ENCODE measurements at regions of chr10 and their contacts with region 1.

Region 1: DNA sequence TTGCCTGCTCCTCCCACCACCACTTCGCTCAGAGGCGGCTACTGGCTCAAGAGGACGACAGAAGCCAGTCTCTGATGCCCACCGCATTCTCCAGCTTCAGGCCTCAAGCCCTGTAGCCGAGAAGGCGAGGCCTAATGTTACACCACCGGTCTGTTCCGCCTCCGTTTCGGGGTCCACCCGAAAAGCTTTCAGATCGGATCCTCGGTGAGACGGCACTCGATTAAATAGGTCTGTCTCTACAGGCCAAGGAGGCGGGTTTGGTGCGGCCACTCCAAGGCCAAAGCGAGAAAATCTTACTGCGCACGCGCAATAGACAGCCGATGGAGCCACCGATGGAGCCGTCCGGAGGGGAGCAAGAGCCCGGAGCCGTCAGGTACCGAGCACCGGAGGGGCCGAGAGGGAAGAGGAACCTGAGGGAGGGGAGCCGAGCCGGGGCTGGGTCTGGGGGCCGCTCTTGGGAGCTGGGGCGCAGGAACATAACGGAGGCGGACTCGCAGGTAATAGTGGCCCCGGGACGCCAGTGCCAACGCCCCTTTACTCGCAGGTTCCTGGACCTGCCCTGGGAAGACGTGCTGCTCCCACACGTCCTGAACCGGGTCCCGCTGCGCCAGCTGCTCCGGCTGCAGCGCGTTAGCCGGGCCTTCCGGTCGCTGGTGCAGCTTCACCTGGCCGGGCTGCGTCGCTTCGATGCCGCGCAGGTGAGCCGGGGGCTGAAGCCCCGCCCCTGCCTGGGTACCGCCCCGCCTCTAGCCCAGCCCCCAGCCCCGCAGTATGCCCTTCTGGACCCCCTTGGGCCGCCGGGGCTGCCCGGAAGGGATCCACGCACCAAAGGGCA is at the start of gene FBXL15:
- DNase-seq: peak; percentile 96
- CTCF ChIP-seq: no peak

Region 2: GRCh38 chr10:102302611-102303010 is 118.4 kb before region 1 on chr10:
- CTCF ChIA-PET with region 1: no interaction called
- POLR2A ChIA-PET with region 1: no interaction called
- DNase-seq: no peak
- CTCF ChIP-seq: no peak

Region 3: DNA sequence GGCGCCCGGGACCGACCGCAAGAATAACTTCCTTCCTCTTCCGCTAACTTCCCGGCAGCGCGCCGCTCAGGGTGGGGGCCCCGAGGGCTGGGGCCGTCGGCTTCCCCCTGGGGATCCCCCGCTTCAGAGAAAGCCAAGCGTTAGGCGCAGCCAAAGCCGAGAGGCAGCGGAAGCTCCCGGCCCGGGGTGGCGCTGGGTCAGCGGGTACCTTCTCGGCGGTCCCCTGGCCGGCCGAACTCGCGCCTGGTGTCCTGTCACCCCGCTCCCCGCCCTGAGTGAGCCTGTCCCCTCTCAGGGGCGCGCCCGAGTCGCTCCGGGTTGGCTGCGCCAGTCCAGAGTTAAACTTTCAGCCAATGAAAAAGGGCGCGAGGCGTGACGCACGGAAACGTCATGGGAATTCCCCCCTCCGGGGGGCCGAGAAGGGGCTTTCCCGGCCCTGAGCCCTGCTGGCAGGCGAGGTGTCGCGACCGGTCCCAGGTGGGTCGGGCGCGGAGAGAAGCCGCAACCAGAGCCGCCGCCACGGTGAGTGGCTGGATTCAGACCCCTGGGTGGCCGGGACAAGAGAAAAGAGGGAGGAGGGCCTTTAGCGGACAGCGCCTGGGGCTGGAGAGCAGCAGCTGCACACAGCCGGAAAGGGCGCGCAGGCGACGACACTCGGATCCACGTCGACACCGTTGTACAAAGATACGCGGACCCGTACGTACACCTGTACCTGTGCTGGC is 26.8 kb before region 1 on chr10:
- CTCF ChIA-PET with region 1: interaction called, 140 read pairs
- POLR2A ChIA-PET with region 1: interaction called, 4 read pairs
- DNase-seq: peak; percentile 98
- CTCF ChIP-seq: no peak

Region 4: GRCh38 chr10:102408728-102409603 is 12.1 kb before region 1 on chr10:
- CTCF ChIA-PET with region 1: interaction called, 65 read pairs
- POLR2A ChIA-PET with region 1: no interaction called
- DNase-seq: peak; percentile 75
- CTCF ChIP-seq: no peak

Region 5: DNA sequence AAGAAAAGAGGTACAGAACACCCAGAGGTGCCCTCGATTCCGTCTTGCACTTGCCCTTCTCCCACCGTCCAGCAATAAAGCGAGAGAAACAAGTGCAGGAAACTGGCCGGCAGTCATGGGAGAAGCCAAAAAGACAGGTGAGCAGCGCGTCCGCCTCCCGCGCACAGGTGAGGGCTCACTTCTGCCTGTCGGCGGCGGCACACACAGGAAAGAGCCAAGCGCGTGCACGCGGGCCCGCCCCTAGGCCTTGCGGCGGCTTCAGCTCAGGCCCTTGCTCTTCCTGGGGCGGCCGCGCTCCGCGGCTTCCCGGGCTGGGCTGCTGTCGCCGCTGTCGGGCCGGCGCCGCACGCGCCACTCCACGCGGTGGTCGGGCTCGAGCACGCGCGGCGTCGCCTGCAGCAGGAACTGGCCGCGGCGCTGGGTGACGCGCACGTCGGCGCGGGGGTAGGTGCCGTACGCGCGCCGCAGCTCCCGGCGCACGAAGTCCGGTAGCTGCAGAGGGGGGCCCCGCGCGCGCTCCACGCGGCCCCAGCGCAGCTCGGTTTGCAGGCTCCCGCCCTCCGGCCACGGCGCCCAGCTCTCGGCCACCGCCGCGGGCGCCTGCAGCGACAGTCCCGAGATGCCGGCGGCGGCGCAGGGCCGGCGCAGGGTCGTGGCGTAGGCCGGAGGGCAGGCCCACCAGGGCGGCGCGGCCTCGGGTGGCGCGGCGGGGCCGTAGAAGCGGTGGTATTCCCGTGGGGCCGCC is 29.3 kb after region 1 on chr10:
- CTCF ChIA-PET with region 1: interaction called, 24 read pairs
- POLR2A ChIA-PET with region 1: no interaction called
- DNase-seq: peak; percentile 90
- CTCF ChIP-seq: no peak

Region 6: DNA sequence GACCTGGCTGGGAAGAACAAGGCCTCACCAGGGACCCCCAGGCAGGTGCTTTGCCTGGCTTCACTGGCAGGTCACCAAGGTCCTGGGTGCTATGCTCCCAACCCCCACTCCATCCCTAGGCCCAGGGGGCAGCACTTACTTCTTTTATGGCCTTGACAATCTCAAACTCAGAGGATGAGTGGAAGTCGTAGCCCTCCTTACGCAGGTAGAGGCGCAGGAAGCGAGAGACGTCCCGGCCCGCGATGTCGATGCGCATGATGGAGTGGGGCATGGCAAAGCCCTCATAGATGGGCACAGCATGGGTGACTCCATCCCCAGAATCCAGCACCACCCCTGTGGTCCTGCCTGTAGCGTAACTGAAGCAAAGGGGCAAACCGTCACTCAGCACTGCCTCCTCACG is 63.0 kb after region 1 on chr10:
- CTCF ChIA-PET with region 1: interaction called, 17 read pairs
- POLR2A ChIA-PET with region 1: no interaction called
- DNase-seq: peak; percentile 4
- CTCF ChIP-seq: no peak

Region 7: DNA sequence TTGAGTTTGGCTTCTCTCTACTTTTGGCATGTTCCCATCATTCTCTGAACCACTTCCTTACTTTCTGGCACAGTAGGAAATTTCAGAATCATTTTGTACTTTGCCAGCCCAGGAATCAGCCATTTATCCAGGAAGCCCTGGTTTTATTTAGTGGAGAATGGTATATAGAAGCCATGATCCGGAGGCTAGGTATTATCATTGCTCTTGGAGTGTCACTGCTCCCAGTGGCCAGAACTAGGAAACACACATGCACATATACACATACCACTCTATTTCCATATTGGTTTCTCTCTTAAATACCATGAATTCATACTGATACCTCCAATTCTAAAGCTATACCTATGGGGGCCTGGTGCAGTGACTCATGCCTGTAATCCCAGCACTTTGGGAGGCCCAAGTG is 119.0 kb after region 1 on chr10:
- CTCF ChIA-PET with region 1: no interaction called
- POLR2A ChIA-PET with region 1: no interaction called
- DNase-seq: peak; percentile 43
- CTCF ChIP-seq: peak; percentile 23